Motor neuron (in vitro differentiated cells): ENCODE measurements at regions of chr1 and their contacts with region 1.

Region 1: GRCh38 chr1:220879076-220879508 is at the start of gene HLX:
- ATAC-seq: peak; percentile 36 to 94 (median 48)
- H3K4me3 ChIP-seq: peak within 1 kb of the TSS; percentile 17 to 36 (median 32)
- H3K27ac ChIP-seq: no peak within 1 kb of the TSS
- H3K4me1 ChIP-seq: peaks cover 13 to 18% of the 10 kb centered on the region in 2 donors
- total RNA-seq, gene HLX: 0.22 to 1.1 (median 0.41) TPM

Region 2: DNA sequence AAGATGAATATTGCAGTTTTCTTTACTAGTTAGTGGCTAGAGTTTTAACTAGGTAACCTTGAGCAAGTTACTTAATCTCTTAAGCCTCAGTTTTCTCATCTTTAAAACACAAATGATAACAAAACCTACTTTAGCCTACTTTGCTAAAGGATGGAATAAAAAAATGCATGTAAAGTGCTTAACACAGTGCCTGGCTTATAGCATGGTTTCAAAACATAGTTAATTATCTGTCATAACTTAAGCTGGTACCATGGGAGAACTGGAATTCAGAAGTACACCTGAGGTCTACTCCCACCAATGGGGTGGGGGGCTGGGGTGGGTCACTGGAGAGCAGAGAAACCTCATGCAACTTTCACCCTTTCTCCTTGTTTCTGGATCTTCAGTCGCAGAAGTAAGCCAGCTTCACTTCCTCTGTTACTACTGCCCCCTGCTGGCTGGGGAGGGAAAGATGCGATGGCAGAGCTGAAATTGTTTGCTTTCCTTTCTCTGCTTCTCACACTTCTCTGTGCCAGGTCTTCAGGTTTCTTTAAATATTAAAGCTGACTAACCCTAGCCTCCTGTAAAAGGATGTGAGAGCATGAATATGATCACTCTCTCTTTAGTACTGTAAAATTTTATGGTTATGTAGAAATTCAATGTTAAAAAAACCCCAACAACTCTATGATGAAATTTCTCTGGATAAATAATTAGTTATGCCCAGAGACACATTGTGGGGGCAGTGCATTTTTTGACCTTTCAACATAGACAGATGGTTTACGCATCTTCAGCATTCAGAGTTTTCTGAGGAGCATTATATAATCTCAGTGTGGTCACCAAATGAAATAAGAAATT is 324.3 kb after region 1 on chr1:
- in situ Hi-C with region 1: loop called in 3 of 9 experiments (anchors 10 to 25 kb)
- ATAC-seq: peak in 3 of 8 experiments; percentile 27 to 50 (median 40)
- H3K4me3 ChIP-seq: no peak overlapping the region
- H3K27ac ChIP-seq: no peak overlapping the region
- H3K4me1 ChIP-seq: no peaks in the 10 kb centered on the region

Region 3: GRCh38 chr1:222455188-222455879 is 1576.2 kb after region 1 on chr1:
- in situ Hi-C with region 1: loop called in 2 of 9 experiments (anchors 10 to 25 kb)
- ATAC-seq: peak; percentile 96 to 100 (median 99)
- H3K4me3 ChIP-seq: peak overlapping the region in 1 of 5 donors; percentile 12
- H3K27ac ChIP-seq: no peak overlapping the region
- H3K4me1 ChIP-seq: peaks cover 3 to 4% of the 10 kb centered on the region in 2 donors